ENCODE measurements at regions of chr1 and their contacts with region 1.

Region 1: DNA sequence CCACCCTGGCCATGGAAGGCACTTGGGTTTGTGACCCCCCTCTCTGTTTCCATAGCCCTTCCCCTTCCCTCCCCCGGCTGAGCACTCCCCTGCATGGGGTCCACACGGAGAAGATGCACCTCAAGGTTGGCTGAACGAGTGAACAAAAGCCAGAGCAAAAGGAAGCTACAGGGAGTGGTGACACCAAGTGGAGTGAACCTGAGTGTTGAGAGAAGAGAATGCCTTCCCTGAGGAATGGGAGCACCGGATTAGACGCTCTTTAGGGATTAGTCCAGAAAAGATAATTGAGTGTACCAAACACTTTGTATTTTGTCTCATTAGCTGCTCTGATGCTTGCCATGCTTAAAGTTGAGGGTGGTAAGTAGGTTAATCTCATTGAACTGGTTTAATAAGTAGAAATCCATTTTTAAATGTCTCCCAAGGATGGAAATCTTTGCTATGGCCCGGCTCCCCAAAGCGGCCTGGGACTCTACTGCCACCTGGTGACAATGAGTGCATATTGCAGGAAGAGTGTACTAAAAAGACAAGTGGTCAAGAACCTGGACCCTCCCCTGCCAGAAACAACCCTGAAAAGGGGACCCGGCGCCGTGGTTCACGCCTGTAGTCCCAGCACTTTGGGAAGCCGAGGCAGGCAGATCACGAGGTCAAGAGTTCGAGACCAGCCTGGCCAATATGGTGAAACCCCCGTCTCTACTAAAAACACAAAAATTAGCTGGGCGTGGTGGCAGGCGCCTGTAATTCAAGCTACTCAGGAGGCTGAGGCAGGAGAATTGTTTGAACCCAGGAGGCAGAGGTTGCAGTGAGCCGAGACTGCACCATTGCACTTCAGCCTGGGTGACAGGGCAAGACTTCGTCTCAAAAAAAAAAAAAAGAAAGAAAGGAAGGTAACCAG is 150.6 kb upstream of the ZC3H12A start:
- DNase-seq: peak; percentile 62
- ATAC-seq: no peak
- H3K4me3 ChIP-seq: no peak overlapping the region
- H3K4me3 Mint-ChIP-seq: no peak overlapping the region
- H3K27ac ChIP-seq: no peak overlapping the region
- H3K27ac Mint-ChIP-seq: no peak overlapping the region
- H3K4me1 ChIP-seq: peaks cover 5% of the 10 kb centered on the region in 2 donors
- H3K4me1 Mint-ChIP-seq: peaks cover 16% of the 10 kb centered on the region
- H3K27me3 ChIP-seq: peaks cover 0 to 22% (median 3%) of the 10 kb centered on the region in 4 experiments
- H3K27me3 Mint-ChIP-seq: peaks cover 26% of the 10 kb centered on the region
- CTCF ChIP-seq: peak; percentile 90

Region 2: DNA sequence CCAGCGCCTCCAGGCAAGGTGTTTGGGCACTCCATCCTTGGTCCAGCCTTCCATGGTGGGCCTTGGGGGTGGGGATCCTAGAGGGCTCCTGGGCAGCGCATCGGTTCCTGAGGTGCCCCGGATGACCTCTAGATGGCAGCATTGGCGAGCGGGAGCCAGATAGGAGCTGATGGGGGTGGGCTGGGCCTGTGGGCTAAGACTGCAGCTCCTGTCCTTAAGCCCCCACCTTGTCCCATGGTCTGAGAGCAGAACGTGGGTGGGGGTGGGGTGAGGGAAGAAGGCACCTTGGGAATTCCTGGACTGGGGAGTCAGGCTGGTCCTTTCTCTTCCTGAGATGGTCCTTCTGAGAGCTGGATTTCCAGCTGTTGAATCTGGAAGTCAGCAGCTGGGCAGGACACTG is 747.6 kb before region 1 on chr1:
- CTCF ChIA-PET with region 1: interaction called, 18 read pairs
- POLR2A ChIA-PET with region 1: no interaction called
- intact Hi-C with region 1: no loop called
- DNase-seq: peak; percentile 65
- ATAC-seq: peak; percentile 69
- H3K4me3 ChIP-seq: no peak overlapping the region
- H3K4me3 Mint-ChIP-seq: no peak overlapping the region
- H3K27ac ChIP-seq: no peak overlapping the region
- H3K27ac Mint-ChIP-seq: no peak overlapping the region
- H3K4me1 ChIP-seq: no peaks in the 10 kb centered on the region
- H3K4me1 Mint-ChIP-seq: no peaks in the 10 kb centered on the region
- H3K27me3 ChIP-seq: peaks cover 0 to 21% (median 2%) of the 10 kb centered on the region in 4 experiments
- H3K27me3 Mint-ChIP-seq: peaks cover 24% of the 10 kb centered on the region
- CTCF ChIP-seq: peak; percentile 79

Region 3: DNA sequence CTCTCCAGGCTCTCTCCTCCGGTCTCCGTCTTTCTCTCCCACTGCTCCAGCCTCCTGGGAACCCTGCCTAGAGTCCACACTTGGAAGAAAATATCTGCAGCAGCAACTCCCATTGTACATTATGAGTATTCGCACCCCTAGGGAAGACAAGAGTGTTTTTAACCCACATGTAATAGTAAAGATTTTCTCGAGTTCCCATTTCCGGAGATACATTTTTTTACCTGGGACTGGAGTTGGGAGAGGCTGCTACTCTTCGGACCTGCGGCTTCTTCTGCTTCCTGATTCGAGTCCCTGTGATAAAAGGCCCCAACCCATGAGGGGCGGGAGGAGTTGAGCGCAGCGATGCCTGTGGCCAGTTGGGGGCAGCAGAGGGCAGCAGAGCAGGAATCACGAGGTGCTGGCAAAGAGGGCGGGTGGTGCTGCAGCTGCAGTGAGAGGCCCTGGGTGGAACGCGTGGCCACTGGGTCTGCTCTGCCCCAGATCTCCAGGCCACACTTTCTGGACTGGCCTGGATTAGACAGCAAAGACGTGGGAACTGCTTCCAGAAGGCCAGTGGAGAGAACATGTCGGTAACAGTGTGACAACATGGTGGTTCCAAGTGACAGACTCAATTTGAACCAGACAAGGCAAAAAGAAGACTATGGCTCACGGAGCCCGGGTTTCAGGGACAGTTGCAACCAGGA is 620.1 kb before region 1 on chr1:
- CTCF ChIA-PET with region 1: interaction called, 12 read pairs
- POLR2A ChIA-PET with region 1: no interaction called
- intact Hi-C with region 1: no loop called
- DNase-seq: peak; percentile 71
- ATAC-seq: peak; percentile 70
- H3K4me3 ChIP-seq: no peak overlapping the region
- H3K4me3 Mint-ChIP-seq: no peak overlapping the region
- H3K27ac ChIP-seq: no peak overlapping the region
- H3K27ac Mint-ChIP-seq: no peak overlapping the region
- H3K4me1 ChIP-seq: peaks cover 0 to 3% of the 10 kb centered on the region in 2 donors
- H3K4me1 Mint-ChIP-seq: peaks cover 6% of the 10 kb centered on the region
- H3K27me3 ChIP-seq: peaks cover 0 to 4% (median 1%) of the 10 kb centered on the region in 4 experiments
- H3K27me3 Mint-ChIP-seq: peaks cover 43% of the 10 kb centered on the region
- CTCF ChIP-seq: peak; percentile 86

Region 4: DNA sequence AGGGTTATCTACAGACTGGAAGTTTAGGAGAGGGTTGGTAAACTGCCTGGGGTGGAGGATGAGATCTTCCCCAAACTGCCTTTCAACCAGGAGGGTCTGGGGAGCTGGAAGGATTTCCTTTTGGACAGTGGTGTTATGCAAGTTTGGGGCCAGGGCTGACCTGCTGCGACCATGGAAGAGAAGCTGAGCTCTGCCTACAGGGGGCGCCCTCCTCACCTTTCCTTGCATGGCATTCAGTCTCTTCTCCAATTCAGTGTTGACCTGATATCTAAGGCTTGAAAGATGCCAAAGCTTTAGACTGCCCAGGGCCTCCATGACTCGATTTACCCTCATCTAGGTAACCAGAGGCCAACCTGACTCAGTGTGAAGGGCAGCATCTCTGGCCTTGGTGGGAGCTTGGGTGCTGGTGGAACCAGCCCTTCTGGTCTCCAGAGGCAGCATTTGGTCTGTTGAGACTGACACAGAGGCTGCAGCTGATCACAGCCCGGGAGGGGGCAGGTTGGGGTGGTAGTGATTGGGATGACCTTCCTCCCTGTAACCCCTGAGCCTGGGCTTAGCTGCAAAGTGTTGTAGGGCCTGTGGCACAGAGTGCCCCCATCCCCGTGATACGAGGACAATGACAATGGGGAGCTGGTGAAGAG is 459.4 kb before region 1 on chr1:
- CTCF ChIA-PET with region 1: interaction called, 12 read pairs
- POLR2A ChIA-PET with region 1: no interaction called
- intact Hi-C with region 1: no loop called
- DNase-seq: peak; percentile 25
- ATAC-seq: no peak
- H3K4me3 ChIP-seq: no peak overlapping the region
- H3K4me3 Mint-ChIP-seq: no peak overlapping the region
- H3K27ac ChIP-seq: no peak overlapping the region
- H3K27ac Mint-ChIP-seq: no peak overlapping the region
- H3K4me1 ChIP-seq: no peaks in the 10 kb centered on the region
- H3K4me1 Mint-ChIP-seq: no peaks in the 10 kb centered on the region
- H3K27me3 ChIP-seq: no peaks in the 10 kb centered on the region
- H3K27me3 Mint-ChIP-seq: peaks cover 12% of the 10 kb centered on the region
- CTCF ChIP-seq: peak; percentile 43

Region 5: DNA sequence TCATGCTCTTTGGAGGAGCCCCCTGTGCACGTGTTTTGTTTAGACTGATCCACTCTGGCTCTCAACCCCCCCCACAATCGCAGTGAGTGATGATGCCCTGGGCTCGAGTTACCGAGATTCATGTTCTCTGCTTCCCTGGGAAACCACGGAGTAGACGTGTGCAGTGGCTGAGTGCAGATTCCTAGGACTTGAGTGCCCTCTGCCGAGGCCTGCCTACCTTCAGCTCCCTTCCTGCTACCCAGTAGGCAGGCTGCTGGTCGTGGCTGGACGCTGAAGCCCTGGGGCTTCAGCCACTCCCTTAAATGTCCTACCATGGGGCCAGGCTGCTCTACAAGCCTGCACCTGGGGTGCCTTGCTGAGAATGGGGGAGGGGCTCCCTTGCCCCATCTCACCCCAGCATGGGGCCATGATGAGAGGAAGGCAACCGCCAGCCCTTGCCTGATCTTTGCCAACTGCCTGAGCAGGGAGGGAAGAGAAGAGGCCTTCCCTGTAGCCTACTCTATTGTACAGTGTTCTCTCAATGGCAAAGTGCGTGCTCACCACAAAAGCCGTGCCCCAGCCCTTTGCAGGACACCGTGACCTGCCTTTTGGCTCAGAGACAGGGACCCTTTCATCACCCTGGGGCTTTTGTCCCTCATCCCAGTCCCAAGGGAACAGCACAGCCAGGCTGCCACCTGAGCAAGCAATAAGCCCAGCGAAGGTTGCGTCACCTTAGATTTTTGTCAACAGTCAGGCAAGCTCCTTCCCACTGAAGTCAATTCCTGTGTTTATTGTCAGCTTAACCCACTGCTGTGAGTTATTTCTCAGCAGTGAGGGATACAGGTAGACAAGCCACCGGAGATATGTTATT is 285.3 kb before region 1 on chr1:
- CTCF ChIA-PET with region 1: interaction called, 10 read pairs
- POLR2A ChIA-PET with region 1: no interaction called
- intact Hi-C with region 1: loop called (anchors 1 kb)
- DNase-seq: no peak
- ATAC-seq: no peak
- H3K4me3 ChIP-seq: no peak overlapping the region
- H3K4me3 Mint-ChIP-seq: no peak overlapping the region
- H3K27ac ChIP-seq: no peak overlapping the region
- H3K27ac Mint-ChIP-seq: no peak overlapping the region
- H3K4me1 ChIP-seq: peaks cover 27 to 28% of the 10 kb centered on the region in 2 donors
- H3K4me1 Mint-ChIP-seq: peaks cover 24% of the 10 kb centered on the region
- H3K27me3 ChIP-seq: peaks cover 0 to 76% (median 33%) of the 10 kb centered on the region in 4 experiments
- H3K27me3 Mint-ChIP-seq: peaks cover 68% of the 10 kb centered on the region
- CTCF ChIP-seq: no peak

Region 6: DNA sequence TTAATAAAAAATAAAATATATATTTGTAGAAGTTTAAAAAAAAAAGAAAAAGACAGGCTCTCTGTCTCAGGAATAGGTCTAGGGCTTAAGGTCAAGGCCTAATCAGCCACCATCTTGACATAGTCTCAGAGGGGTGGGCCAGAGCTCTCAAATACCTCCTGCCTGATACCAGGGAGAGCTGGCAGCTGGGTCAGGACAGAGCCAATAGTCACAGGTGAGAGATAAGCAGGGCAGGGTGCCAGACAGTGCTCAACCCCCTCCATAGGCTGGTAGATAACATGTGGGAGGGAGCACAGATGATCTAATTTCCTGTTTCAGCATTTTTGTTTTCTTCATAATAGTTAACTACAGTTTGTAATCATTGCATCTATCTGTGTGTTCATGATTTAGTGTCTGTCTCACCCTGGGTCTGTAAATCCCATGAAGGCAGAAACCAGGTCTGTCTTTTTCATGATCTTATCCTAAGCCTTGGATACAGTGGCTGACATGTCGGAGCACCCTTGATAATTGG is 137.4 kb before region 1 on chr1:
- CTCF ChIA-PET with region 1: no interaction called
- POLR2A ChIA-PET with region 1: no interaction called
- intact Hi-C with region 1: no loop called
- DNase-seq: no peak
- ATAC-seq: no peak
- H3K4me3 ChIP-seq: no peak overlapping the region
- H3K4me3 Mint-ChIP-seq: no peak overlapping the region
- H3K27ac ChIP-seq: no peak overlapping the region
- H3K27ac Mint-ChIP-seq: no peak overlapping the region
- H3K4me1 ChIP-seq: no peaks in the 10 kb centered on the region
- H3K4me1 Mint-ChIP-seq: no peaks in the 10 kb centered on the region
- H3K27me3 ChIP-seq: peaks cover 0 to 11% (median 7%) of the 10 kb centered on the region in 4 experiments
- H3K27me3 Mint-ChIP-seq: peaks cover 34% of the 10 kb centered on the region
- CTCF ChIP-seq: no peak